Caco-2 (cell line): ENCODE measurements at regions of chr11 and their contacts with region 1.

Region 1: DNA sequence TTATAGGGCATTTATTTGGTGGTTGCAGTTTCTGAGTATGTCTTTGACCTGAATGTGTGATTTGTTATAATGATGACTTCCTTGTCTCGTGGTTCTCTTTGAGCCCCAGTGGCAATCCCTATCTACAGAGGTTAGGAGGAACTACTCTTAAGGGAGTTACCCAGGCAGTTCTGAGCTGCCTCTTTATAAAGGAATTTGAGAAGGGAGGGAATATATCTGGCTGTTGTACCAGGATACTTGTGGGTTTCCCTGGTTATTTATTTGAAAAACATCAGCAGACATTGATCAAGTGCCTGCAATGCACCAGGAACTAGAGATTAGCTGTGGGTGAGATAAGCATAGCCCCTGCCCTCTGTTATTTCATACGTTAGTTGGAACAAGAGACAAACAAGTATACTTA is 243.5 kb upstream of the ARHGAP20 start:
- DNase-seq: no peak
- H3K4me3 ChIP-seq: no peak overlapping the region
- H3K4me3 Mint-ChIP-seq: no peak overlapping the region
- H3K27ac Mint-ChIP-seq: no peak overlapping the region
- H3K4me1 ChIP-seq: no peaks in the 10 kb centered on the region
- H3K4me1 Mint-ChIP-seq: no peaks in the 10 kb centered on the region
- H3K27me3 ChIP-seq: no peaks in the 10 kb centered on the region; the same call in 1 of the 2 replicates
- H3K27me3 Mint-ChIP-seq: peaks cover 23% of the 10 kb centered on the region
- CTCF ChIP-seq: no peak

Region 2: DNA sequence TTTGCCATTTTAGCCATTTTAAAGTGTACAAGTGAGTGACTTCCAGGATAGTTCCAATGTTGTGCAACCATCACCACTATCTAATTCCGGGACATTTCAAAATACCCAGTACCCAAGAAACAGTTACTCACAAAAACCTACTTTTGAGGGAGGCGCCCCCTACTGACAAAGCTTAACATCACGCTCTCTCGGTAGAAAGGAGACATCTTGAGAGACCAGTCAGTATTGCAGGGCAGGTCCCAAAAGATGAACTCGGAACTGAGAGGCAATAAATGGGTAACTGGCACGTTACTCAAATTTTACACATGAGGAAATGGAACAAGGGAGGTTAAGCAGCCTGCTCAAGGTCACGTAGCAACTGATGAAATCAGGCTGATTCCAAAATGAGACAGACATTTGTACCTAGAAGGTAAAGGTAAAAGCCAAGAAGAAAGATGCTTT is 473.3 kb after region 1 on chr11:
- CTCF ChIA-PET with region 1: no interaction called
- POLR2A ChIA-PET with region 1: no interaction called
- intact Hi-C with region 1: loop called (anchors 5 kb)
- DNase-seq: peak; percentile 78 to 82
- H3K4me3 ChIP-seq: no peak overlapping the region
- H3K4me3 Mint-ChIP-seq: no peak overlapping the region
- H3K27ac Mint-ChIP-seq: no peak overlapping the region
- H3K4me1 ChIP-seq: no peaks in the 10 kb centered on the region
- H3K4me1 Mint-ChIP-seq: peaks cover 5% of the 10 kb centered on the region
- H3K27me3 ChIP-seq: no peaks in the 10 kb centered on the region
- H3K27me3 Mint-ChIP-seq: peaks cover 3% of the 10 kb centered on the region
- CTCF ChIP-seq: peak; percentile 80 to 85

Region 3: DNA sequence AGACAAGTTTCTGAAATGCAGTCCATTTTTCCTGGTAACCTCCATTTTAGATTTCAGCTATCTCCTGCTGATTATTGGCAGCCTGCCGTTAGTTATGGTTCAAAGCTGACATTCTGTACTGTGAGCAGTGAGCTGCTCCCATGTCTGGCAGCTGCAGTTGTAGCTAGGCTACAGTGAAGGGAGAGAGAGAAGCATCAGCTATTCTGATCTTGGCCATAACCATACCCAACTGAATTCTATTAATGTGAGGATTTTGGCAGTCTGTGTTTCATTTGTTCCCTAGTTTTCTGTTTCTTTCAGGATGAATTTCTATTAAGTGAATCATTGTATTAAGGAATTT is 679.9 kb after region 1 on chr11:
- CTCF ChIA-PET with region 1: no interaction called
- POLR2A ChIA-PET with region 1: no interaction called
- intact Hi-C with region 1: no loop called
- DNase-seq: no peak
- H3K4me3 ChIP-seq: no peak overlapping the region
- H3K4me3 Mint-ChIP-seq: no peak overlapping the region
- H3K27ac Mint-ChIP-seq: no peak overlapping the region
- H3K4me1 ChIP-seq: peaks cover 32% of the 10 kb centered on the region
- H3K4me1 Mint-ChIP-seq: peaks cover 48% of the 10 kb centered on the region
- H3K27me3 ChIP-seq: no peaks in the 10 kb centered on the region
- H3K27me3 Mint-ChIP-seq: no peaks in the 10 kb centered on the region
- CTCF ChIP-seq: no peak